Gastrocnemius medialis (tissue), 4 donors: ENCODE measurements at regions of chr15 and their contacts with region 1.

Region 1: GRCh38 chr15:65638681-65639089 is 16.9 kb downstream of the SLC24A1 start:
- DNase-seq: peak in 1 of 2 donors; percentile 9
- ATAC-seq: peak; percentile 76 to 85
- H3K4me3 ChIP-seq: no peak overlapping the region
- H3K27ac ChIP-seq: no peak overlapping the region
- H3K4me1 ChIP-seq: no peaks in the 10 kb centered on the region
- H3K27me3 ChIP-seq: no peaks in the 10 kb centered on the region
- CTCF ChIP-seq: peak; percentile 58 to 79 (median 70)
- POLR2A ChIP-seq: no peak

Region 2: DNA sequence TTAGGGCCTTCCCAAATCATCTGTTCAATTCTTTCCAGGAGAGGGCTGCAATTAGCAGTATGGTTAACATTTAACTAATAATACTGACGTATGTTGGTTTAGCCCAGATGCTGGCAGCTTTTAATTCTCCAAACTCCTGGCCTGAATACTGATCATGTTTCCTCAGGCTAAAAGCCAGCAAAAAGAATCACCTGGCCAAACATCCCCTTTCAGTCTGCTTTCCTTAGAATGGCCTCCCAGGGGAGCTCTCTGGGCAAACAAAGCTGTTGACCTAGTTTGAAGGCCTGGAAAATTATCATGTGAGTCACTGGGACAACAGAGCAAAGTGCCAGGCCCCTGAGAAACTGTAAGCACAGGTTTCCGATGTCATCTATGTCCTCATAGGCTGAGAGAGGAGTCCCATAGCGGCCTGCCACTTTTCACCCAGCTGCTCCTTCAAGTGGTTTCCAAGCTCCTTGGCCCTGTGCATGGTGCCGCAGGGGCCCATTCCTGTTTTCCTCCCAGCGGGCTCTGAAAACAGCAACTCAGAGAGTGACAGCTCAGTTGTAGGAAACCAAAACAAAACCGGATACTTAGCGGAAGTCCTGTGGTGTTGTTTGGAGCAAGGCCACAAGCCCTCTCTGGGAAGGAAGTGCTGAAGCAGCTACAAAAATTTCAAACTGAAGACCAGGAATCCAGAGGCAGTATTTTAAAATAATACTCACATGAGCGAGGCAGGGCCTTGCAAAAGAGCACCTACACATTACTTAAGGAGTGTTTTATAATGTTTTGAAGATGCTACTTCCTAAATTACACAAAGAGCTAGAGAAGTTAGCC is 194.1 kb after region 1 on chr15:
- in situ Hi-C with region 1: no loop called
- intact Hi-C with region 1: loop called (anchors 2 kb)
- DNase-seq: peak; percentile 94 to 97
- ATAC-seq: peak; percentile 98 to 99
- H3K4me3 ChIP-seq: peak overlapping the region; percentile 7 to 41 (median 34)
- H3K27ac ChIP-seq: peak overlapping the region; percentile 86 to 95 (median 91)
- H3K4me1 ChIP-seq: peaks cover 29 to 52% of the 10 kb centered on the region in 2 donors
- H3K27me3 ChIP-seq: no peaks in the 10 kb centered on the region
- CTCF ChIP-seq: peak in 4 of 5 experiments; percentile 10 to 36 (median 28)
- POLR2A ChIP-seq: no peak

Region 3: GRCh38 chr15:65869127-65869953 is 230.7 kb after region 1 on chr15 and contains the start of gene RAB11A:
- in situ Hi-C with region 1: loop called (anchors 25 kb)
- intact Hi-C with region 1: loop called (anchors 10 kb)
- DNase-seq: peak; percentile 94 to 97
- ATAC-seq: peak; percentile 93 to 94
- H3K4me3 ChIP-seq: peak within 1 kb of the TSS; percentile 87 to 98 (median 88)
- H3K27ac ChIP-seq: peak within 1 kb of the TSS; percentile 92 to 100 (median 95)
- H3K4me1 ChIP-seq: peaks cover 17 to 23% of the 10 kb centered on the region in 2 donors
- H3K27me3 ChIP-seq: no peaks in the 10 kb centered on the region
- CTCF ChIP-seq: peak in 4 of 5 experiments; percentile 25 to 55 (median 40)
- POLR2A ChIP-seq: peak; percentile 95 to 98
- total RNA-seq, gene RAB11A: 93.0 to 207 (median 166) TPM

Region 4: DNA sequence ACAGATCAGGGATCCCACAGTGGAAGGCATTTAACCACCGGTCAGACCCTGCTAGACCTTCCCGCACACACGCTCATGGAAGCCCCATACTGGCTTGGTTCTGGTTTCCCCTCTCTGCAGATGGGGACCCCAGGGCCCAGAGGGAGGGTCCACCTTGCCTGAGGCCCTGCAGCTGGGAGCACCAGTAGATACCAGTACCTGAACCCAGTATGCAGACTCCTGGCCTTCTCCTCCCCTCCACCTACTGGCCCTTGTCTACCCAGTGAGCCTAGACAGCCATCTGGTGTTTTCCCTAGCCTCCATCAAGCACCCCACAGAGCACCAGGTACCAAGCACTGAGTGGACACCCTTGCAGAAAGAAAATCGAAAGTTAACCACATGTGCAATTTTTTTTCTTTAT is 549.8 kb after region 1 on chr15:
- in situ Hi-C with region 1: no loop called
- intact Hi-C with region 1: loop called (anchors 5 kb)
- DNase-seq: no peak
- ATAC-seq: no peak
- H3K4me3 ChIP-seq: no peak overlapping the region
- H3K27ac ChIP-seq: no peak overlapping the region
- H3K4me1 ChIP-seq: no peaks in the 10 kb centered on the region
- H3K27me3 ChIP-seq: peaks cover 0 to 14% (median 0%) of the 10 kb centered on the region in 3 donors
- CTCF ChIP-seq: no peak
- POLR2A ChIP-seq: no peak

Region 5: GRCh38 chr15:66251790-66252684 is 613.4 kb after region 1 on chr15:
- in situ Hi-C with region 1: loop called in 1 of 4 experiments (anchors 25 kb)
- intact Hi-C with region 1: no loop called
- DNase-seq: no peak
- ATAC-seq: peak; percentile 67 to 77
- H3K4me3 ChIP-seq: peak overlapping the region; percentile 56 to 83 (median 62)
- H3K27ac ChIP-seq: no peak overlapping the region
- H3K4me1 ChIP-seq: peaks cover 9 to 27% of the 10 kb centered on the region in 2 donors
- H3K27me3 ChIP-seq: peaks cover 45 to 63% (median 57%) of the 10 kb centered on the region in 3 donors
- CTCF ChIP-seq: peak; percentile 31 to 66 (median 48)
- POLR2A ChIP-seq: no peak

Region 6: GRCh38 chr15:66293419-66294156 is 654.9 kb after region 1 on chr15 and contains the start of gene DIS3L:
- in situ Hi-C with region 1: loop called in 3 of 4 experiments (anchors 25 kb)
- intact Hi-C with region 1: no loop called
- DNase-seq: peak; percentile 5 to 25
- ATAC-seq: peak; percentile 83 to 88
- H3K4me3 ChIP-seq: peak within 1 kb of the TSS; percentile 69 to 74 (median 71)
- H3K27ac ChIP-seq: peak within 1 kb of the TSS; percentile 78 to 88 (median 85)
- H3K4me1 ChIP-seq: peaks cover 26 to 31% of the 10 kb centered on the region in 2 donors
- H3K27me3 ChIP-seq: no peaks in the 10 kb centered on the region
- CTCF ChIP-seq: peak in 1 of 5 experiments; percentile 16
- POLR2A ChIP-seq: peak; percentile 3 to 11
- total RNA-seq, gene DIS3L: 21.9 to 35.1 (median 32.1) TPM